ENCODE measurements at regions of chr17 and their contacts with region 1.

Region 1: DNA sequence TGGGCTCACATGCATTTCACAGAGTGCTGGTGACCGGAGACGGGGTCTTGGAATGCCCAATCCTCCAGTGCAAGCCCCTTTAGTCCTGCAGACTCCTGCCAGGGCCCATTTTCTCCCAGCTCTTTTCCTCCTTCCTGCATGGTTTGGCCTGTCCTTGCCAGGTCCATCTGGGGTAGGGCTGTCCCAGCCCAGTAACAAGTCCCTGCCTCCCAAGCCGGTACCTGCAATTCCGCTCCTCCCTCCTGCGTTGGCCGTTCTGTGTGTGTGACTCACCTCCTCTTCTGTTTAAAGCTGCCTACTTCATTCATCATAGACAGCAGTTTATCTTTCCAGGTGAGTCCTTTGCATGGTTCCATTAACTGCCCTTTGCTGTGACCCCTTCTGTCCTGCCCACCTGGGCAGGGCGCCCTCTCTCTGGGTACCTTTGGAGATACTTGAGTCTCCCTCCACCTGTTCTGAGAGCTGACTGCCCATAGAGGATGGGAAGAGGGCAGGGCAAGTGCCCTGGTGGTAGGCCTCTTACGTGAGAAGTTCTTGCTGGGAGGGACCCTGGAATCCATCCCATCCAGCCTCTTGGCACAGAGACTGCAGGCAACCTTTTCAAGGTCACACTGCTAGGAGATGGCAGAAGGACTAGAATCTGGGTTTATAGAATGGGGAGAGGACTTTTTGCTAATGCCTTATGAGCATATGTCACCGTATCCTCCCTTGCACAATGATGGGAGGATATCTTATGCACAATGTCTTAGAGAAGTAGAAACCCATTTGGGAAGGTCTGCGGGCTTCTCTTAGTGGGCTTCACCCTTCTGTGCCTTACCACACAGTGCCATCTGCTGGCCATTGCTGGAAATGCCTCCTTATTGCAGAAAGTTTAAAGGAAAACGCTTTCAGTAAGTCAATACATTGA is 29.7 kb upstream of the LGALS9 start:
- DNase-seq: peak; percentile 88
- H3K4me3 ChIP-seq: no peak overlapping the region
- H3K27ac ChIP-seq: no peak overlapping the region
- H3K4me1 ChIP-seq: peaks cover 0 to 38% (median 23%) of the 10 kb centered on the region in 6 donors
- H3K27me3 ChIP-seq: no peaks in the 10 kb centered on the region
- CTCF ChIP-seq: peak; percentile 75 to 96 (median 90)
- POLR2A ChIP-seq: no peak

Region 2: GRCh38 chr17:27236717-27237315 is 364.5 kb before region 1 on chr17:
- intact Hi-C with region 1: loop called (anchors 5 kb)
- DNase-seq: no peak
- H3K4me3 ChIP-seq: no peak overlapping the region
- H3K27ac ChIP-seq: peak overlapping the region in 1 of 8 donors; percentile 97
- H3K4me1 ChIP-seq: peaks cover 8 to 62% (median 23%) of the 10 kb centered on the region in 6 donors
- H3K27me3 ChIP-seq: no peaks in the 10 kb centered on the region
- CTCF ChIP-seq: peak; percentile 90 to 97 (median 95)
- POLR2A ChIP-seq: no peak

Region 3: DNA sequence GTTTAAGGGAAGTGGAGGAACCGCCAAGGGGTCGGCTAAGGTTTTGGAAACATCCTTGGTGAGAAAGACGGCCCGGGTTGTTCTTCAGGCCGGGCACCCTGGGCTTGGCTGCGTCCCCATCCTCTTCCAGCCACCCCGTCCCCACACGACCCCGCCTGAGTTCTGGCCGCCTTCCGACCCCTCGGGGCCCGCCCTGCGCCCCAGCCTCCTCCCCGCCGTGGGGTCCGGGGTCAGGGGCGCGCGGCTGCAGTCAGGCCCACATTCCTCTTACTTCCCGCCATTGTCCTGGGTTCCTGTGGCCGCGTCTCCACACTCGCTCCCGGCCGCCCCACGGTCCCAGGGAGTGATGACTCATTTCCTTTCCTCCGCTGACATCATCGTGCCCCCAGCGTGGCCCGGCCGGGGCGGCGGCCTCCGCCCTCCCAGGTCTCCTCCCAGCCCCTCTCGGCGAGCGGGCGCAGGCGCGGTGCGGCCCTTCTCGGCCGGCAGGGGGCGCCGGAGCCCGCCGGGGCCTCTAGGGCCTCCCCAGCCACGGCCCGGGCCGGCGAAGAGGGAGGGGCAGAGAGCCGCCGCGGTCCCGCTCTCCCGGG is 247.8 kb before region 1 on chr17:
- intact Hi-C with region 1: loop called (anchors 5 kb)
- DNase-seq: peak; percentile 97
- H3K4me3 ChIP-seq: peak overlapping the region; percentile 20 to 72 (median 49)
- H3K27ac ChIP-seq: peak overlapping the region; percentile 82 to 92 (median 90)
- H3K4me1 ChIP-seq: peaks cover 16 to 49% (median 27%) of the 10 kb centered on the region in 6 donors
- H3K27me3 ChIP-seq: no peaks in the 10 kb centered on the region
- CTCF ChIP-seq: peak; percentile 45 to 99 (median 98)
- POLR2A ChIP-seq: peak in 2 of 3 donors; percentile 31 to 61

Region 4: DNA sequence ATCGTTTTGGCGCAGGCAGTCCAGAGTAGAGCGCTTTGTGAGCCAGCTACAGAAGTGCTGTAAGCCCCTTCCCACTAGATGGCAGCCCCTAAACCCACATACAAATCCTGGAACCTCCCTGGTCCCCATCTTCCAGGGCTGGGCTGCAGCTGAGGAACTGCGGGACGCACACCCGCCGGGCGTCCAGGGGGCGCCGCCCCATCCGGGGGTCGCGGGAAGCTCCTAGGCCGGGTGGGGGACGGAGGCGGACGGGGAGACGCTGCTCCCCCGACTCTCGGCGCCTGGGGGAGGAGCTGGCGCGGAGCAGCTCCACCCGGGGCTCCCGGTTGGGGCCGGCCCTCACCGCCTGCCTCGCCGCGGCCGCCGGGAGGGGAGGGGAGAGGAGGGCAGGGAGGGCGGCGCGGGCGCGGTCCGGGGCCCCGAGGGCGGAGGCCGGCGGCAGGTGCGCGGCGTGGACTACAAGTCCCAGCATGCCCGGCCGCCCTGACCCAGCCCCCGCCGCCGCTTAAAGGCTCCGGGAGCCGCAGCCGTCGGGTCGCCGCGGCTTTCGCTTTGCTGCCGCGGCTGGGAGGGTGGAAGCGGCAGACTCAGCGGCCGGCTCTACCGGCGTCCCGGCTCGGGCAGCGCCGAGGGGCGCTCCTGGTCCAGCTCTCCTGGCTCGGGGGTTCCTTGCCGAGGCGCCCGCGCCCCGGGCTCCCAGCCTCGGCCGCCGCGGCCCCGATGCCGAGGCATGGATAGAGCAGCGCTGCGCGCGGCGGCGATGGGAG is 145.2 kb before region 1 on chr17 and contains the start of gene KSR1:
- intact Hi-C with region 1: loop called (anchors 10 kb)
- DNase-seq: peak; percentile 97
- H3K4me3 ChIP-seq: peak within 1 kb of the TSS; percentile 75 to 96 (median 84)
- H3K27ac ChIP-seq: peak within 1 kb of the TSS; percentile 57 to 88 (median 83)
- H3K4me1 ChIP-seq: peaks cover 6 to 50% (median 34%) of the 10 kb centered on the region in 6 donors
- H3K27me3 ChIP-seq: no peaks in the 10 kb centered on the region
- CTCF ChIP-seq: peak in 8 of 11 experiments; percentile 32 to 68 (median 45)
- POLR2A ChIP-seq: peak in 1 of 3 donors; percentile 72
- total RNA-seq, gene KSR1: 35.2 to 100 (median 58.7) TPM

Region 5: DNA sequence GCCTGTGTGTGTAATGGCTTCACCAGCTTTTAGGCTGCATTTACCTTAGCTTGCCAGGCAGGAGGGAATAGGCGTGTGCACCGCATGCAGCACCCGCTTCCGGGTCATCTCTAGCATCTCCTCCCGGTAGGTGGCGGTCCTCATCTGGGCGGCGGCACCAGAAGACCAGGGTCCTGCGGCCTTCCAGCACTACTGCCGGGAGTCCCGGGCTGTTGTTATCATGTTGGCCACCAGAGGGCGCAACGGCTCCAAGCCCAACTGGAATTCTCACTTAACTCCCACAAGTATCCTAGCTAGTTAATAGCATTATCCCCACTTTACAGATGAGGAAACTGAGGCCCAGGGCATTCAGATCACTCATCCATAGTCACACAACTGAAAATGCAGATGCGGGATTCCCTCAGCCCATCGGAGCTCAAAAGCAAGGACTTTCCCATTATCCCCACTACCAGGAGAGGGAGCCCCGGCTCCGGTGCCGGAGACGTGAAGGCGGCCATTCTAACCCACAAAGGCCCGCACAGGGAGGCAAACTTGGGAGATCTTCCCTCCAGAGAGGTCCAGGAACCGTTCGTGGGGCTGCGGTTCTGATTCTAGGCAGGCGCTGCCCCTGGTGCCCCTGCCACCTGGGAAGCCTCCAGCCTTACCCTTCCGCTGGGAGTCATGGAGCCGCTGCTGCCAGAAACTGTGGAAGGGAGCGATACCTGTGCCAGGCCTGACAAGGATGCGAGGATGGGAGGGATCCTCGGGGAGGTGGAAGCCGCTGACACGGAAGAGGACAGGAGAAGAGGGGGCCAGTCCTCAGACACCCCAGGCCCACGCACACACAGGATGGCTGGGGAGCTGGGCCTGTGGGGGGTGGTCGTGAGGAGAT is 53.6 kb after region 1 on chr17:
- intact Hi-C with region 1: loop called (anchors 2 kb)
- DNase-seq: peak; percentile 91
- H3K4me3 ChIP-seq: no peak overlapping the region
- H3K27ac ChIP-seq: no peak overlapping the region
- H3K4me1 ChIP-seq: peaks cover 0 to 8% (median 4%) of the 10 kb centered on the region in 6 donors
- H3K27me3 ChIP-seq: peaks cover 0 to 5% (median 0%) of the 10 kb centered on the region in 7 donors
- CTCF ChIP-seq: peak; percentile 75 to 95 (median 90)
- POLR2A ChIP-seq: no peak

Region 6: DNA sequence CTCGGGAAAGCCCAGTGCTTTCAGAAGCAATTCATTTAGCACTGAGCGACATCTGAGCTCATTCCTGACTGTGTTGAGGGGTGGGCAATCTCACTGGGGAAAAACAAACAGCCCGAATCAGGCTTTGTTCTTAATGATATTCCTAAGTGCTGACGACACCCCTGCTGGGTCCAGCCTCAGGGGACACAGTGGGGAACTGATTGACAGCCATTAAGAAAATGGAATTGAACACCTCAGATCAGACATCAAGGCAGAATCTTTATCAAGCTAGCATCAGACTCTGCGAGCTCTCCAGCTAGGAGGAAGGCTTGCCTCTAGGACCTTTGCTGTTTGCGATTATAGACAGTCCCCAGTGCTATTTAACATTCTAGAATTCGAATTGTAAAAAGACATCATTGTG is 314.4 kb after region 1 on chr17:
- intact Hi-C with region 1: no loop called
- DNase-seq: no peak
- H3K4me3 ChIP-seq: no peak overlapping the region
- H3K27ac ChIP-seq: no peak overlapping the region
- H3K4me1 ChIP-seq: no peaks in the 10 kb centered on the region
- H3K27me3 ChIP-seq: peaks cover 0 to 5% (median 0%) of the 10 kb centered on the region in 7 donors
- CTCF ChIP-seq: no peak
- POLR2A ChIP-seq: no peak